SK-N-SH (cell line): ENCODE measurements at regions of chr12 and their contacts with region 1.

Region 1: DNA sequence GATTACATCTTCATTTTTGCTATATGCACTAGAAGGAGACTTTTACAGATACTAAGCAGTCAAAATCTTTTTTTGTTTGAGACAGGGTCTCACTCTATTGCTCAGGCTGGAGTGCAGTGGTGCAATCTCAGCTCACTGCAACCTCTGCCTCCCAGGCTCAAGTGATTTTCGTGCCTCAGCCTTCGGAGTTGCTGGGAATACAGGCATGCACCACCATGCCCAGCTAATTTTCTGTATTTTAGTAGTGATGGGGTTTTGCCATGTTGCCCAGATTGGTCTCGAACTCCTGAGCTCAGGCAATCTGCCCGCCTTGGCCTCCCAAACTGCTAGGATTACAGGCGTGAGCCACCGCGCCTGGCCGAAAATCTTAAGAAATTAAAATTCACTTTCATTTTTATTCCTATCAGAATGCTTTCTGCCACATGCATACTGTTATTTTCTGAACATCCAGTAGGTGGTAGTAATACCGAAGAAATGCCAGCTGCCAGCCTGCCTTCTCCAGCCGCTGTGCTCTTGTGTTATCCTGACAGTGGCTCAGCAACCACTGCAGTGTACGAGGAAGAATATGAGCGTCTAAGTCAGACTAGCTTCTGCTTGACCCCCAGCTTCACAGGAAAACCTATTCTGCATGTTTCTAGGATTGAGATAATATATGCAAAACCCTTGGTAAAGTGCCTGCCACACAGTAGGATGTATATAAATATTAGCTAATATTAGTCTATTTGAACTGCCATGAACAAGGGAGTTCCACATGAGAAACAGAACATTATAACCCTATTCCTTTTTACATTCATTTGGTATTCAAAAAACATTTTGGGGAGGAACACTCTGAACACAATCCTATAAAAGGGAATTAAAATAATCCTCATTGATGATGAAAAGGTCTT is 54.2 kb downstream of the RPAP3 start:
- DNase-seq: peak; percentile 54
- H3K4me3 ChIP-seq: peak overlapping the region in 1 of 2 experiments; percentile 47; a peak in 2 of 4 replicates
- H3K27ac ChIP-seq: no peak overlapping the region
- H3K4me1 ChIP-seq: peaks cover 3 to 4% of the 10 kb centered on the region in 2 experiments; a peak in 2 of 4 replicates
- H3K27me3 ChIP-seq: no peaks in the 10 kb centered on the region
- CTCF ChIP-seq: peak; percentile 75
- EP300 ChIP-seq: no peak
- RAD21 ChIP-seq: peak; percentile 88

Region 2: DNA sequence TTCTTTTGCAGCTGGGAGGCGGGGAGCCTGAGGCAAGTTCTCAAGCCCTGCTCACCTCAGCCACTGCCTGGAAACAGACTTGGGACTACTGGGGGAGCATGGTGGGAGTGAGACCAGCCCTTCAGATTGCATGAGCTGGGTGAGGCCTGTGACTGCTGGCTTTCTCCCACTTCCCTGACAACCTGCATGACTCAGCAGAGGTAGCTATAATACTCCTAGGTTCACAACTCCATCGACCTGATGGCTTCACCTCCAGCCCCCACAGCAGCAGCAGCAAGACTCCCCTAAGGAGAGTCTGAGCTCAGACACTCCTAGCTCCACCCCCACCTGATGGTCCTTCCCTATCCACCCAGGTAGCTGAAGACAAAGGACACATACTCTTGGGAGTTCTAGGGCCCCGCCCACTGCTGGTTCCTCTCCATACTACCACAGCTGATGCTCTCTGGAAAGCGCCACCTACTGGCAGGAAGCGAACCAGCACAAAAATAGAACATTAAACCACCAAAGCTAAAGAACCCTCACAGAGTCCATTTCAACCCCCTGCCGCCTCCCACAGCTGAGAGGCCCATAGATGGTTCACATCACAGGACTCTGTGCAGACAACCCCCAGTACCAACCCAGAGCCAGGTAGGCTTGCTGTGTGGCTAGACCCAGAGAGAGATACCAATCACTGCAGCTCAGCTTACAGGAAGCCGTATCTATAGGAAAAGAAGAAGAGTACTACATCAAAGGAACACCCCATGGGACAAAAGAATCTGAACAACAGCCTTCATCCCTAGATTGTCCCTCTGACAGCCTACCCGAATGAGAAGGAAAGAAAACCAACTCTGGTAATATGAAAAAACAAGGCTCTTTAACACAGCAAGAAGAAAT is 14.5 kb before region 1 on chr12:
- CTCF ChIA-PET with region 1: interaction called, 16 read pairs
- POLR2A ChIA-PET with region 1: no interaction called
- DNase-seq: no peak
- H3K4me3 ChIP-seq: no peak overlapping the region
- H3K27ac ChIP-seq: no peak overlapping the region
- H3K4me1 ChIP-seq: no peaks in the 10 kb centered on the region
- H3K27me3 ChIP-seq: no peaks in the 10 kb centered on the region
- CTCF ChIP-seq: peak; percentile 53
- EP300 ChIP-seq: no peak
- RAD21 ChIP-seq: no peak

Region 3: GRCh38 chr12:47672068-47672467 is 20.5 kb after region 1 on chr12:
- CTCF ChIA-PET with region 1: interaction called, 23 read pairs
- POLR2A ChIA-PET with region 1: interaction called, 3 read pairs
- DNase-seq: no peak
- H3K4me3 ChIP-seq: no peak overlapping the region
- H3K27ac ChIP-seq: no peak overlapping the region
- H3K4me1 ChIP-seq: peaks cover 0 to 3% of the 10 kb centered on the region in 2 experiments; a peak in 2 of 4 replicates
- H3K27me3 ChIP-seq: no peaks in the 10 kb centered on the region
- CTCF ChIP-seq: no peak
- EP300 ChIP-seq: no peak
- RAD21 ChIP-seq: no peak

Region 4: GRCh38 chr12:47679785-47680184 is 28.2 kb after region 1 on chr12:
- CTCF ChIA-PET with region 1: interaction called, 101 read pairs
- POLR2A ChIA-PET with region 1: no interaction called
- DNase-seq: no peak
- H3K4me3 ChIP-seq: no peak overlapping the region
- H3K27ac ChIP-seq: no peak overlapping the region
- H3K4me1 ChIP-seq: no peaks in the 10 kb centered on the region
- H3K27me3 ChIP-seq: no peaks in the 10 kb centered on the region
- CTCF ChIP-seq: no peak
- EP300 ChIP-seq: no peak
- RAD21 ChIP-seq: no peak

Region 5: DNA sequence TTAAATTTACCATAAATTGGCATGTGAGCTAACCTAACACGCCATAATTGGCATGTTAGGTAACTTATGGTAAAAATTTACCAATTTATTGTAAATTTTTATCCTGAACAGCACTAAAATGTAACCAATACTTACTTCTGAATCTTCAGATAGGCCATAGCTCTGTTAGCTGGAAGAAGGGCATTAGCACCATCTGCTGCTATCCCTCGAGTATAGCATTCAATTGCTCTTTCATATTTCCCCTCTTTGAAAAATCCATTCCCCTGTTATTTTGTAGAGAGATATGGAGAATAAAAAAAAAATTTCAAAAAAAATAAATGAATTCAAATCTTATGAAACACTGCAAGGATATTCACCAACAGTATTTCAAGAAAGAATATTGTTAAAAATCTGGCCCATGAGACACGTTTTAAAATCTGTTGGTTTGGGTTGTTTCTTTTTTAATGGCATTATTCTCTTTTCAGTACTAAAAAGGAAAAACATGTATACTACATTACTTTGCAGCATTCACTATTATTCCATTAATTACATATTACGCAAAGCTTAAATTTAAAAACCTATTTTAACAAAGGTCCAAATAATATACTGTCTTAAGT is 35.1 kb after region 1 on chr12:
- CTCF ChIA-PET with region 1: interaction called, 101 read pairs
- POLR2A ChIA-PET with region 1: no interaction called
- DNase-seq: peak; percentile 44
- H3K4me3 ChIP-seq: no peak overlapping the region
- H3K27ac ChIP-seq: no peak overlapping the region
- H3K4me1 ChIP-seq: no peaks in the 10 kb centered on the region
- H3K27me3 ChIP-seq: no peaks in the 10 kb centered on the region
- CTCF ChIP-seq: peak; percentile 83
- EP300 ChIP-seq: no peak
- RAD21 ChIP-seq: peak; percentile 84

Region 6: DNA sequence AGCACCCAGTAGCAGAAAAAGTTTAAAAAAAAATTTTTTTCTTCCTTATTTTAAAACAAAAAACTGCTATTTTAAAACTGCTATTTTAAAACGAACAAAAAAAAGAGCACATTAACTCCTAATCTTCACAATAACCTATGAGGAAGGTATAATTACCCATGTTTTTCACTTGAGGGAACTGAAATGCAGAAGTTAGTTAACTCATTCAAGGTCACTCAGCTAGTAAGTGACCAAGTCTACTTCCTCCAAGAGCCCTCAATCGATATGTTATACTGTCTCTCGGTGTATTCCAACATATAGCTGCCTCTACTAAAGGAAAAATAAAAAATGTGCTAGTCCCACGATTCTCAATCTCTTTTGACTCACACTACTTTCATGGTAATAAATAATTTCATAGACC is 46.4 kb after region 1 on chr12:
- CTCF ChIA-PET with region 1: interaction called, 10 read pairs
- POLR2A ChIA-PET with region 1: no interaction called
- DNase-seq: no peak
- H3K4me3 ChIP-seq: no peak overlapping the region
- H3K27ac ChIP-seq: no peak overlapping the region
- H3K4me1 ChIP-seq: no peaks in the 10 kb centered on the region
- H3K27me3 ChIP-seq: no peaks in the 10 kb centered on the region
- CTCF ChIP-seq: no peak
- EP300 ChIP-seq: no peak
- RAD21 ChIP-seq: no peak